CD4-positive, alpha-beta memory T cell (primary cell): ENCODE measurements at regions of chr14 and their contacts with region 1.

Region 1: GRCh38 chr14:70622111-70622712 is 19.5 kb upstream of the TTC9 start:
- DNase-seq: peak; percentile 47 to 63 (median 61)
- H3K4me3 ChIP-seq: no peak overlapping the region
- H3K4me3 Mint-ChIP-seq: no peak overlapping the region
- H3K27ac ChIP-seq: no peak overlapping the region
- H3K27ac Mint-ChIP-seq: no peak overlapping the region
- H3K4me1 ChIP-seq: no peaks in the 10 kb centered on the region
- H3K4me1 Mint-ChIP-seq: peaks cover 0 to 2% (median under 1%) of the 10 kb centered on the region in 4 donors
- H3K27me3 ChIP-seq: no peaks in the 10 kb centered on the region
- H3K27me3 Mint-ChIP-seq: no peaks in the 10 kb centered on the region

Region 2: DNA sequence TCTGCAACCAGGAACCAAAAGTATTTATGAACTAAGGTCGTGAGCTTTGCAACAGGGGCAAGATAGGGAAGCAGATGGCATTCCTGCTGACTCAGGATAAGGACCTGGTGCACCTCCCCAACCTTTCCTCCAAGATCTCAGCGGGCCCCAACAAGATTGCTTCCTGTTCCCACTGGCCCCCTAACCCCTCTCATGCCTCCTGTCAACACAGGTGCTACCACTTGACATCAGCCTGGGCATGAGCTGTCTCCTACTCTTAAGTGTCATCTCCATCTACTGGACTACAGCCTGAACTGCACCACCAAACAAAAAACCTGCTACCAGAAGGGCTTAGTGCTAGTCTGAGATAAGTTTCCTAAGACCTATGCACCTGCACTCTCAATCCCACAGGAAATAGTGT is 54.4 kb before region 1 on chr14:
- CTCF ChIA-PET with region 1: no interaction called
- POLR2A ChIA-PET with region 1: no interaction called
- intact Hi-C with region 1: no loop called
- DNase-seq: no peak
- H3K4me3 ChIP-seq: no peak overlapping the region
- H3K4me3 Mint-ChIP-seq: no peak overlapping the region
- H3K27ac ChIP-seq: no peak overlapping the region
- H3K27ac Mint-ChIP-seq: peak overlapping the region in 1 of 7 donors; percentile 9
- H3K4me1 ChIP-seq: no peaks in the 10 kb centered on the region
- H3K4me1 Mint-ChIP-seq: peaks cover 6 to 20% (median 17%) of the 10 kb centered on the region in 4 donors
- H3K27me3 ChIP-seq: no peaks in the 10 kb centered on the region
- H3K27me3 Mint-ChIP-seq: no peaks in the 10 kb centered on the region

Region 3: GRCh38 chr14:70640938-70641547 is 18.8 kb after region 1 on chr14:
- CTCF ChIA-PET with region 1: interaction called, 20 read pairs
- POLR2A ChIA-PET with region 1: interaction called, 8 read pairs
- intact Hi-C with region 1: loop called (anchors 2 kb)
- DNase-seq: peak; percentile 52 to 78 (median 59)
- H3K4me3 ChIP-seq: peak overlapping the region; percentile 78 to 85
- H3K4me3 Mint-ChIP-seq: peak overlapping the region; percentile 95 to 100 (median 97)
- H3K27ac ChIP-seq: peak overlapping the region; percentile 56
- H3K27ac Mint-ChIP-seq: peak overlapping the region; percentile 88 to 98 (median 95)
- H3K4me1 ChIP-seq: peaks cover 48% of the 10 kb centered on the region
- H3K4me1 Mint-ChIP-seq: peaks cover 35 to 64% (median 47%) of the 10 kb centered on the region in 4 donors
- H3K27me3 ChIP-seq: no peaks in the 10 kb centered on the region
- H3K27me3 Mint-ChIP-seq: peaks cover 0 to 1% of the 10 kb centered on the region in 2 donors

Region 4: DNA sequence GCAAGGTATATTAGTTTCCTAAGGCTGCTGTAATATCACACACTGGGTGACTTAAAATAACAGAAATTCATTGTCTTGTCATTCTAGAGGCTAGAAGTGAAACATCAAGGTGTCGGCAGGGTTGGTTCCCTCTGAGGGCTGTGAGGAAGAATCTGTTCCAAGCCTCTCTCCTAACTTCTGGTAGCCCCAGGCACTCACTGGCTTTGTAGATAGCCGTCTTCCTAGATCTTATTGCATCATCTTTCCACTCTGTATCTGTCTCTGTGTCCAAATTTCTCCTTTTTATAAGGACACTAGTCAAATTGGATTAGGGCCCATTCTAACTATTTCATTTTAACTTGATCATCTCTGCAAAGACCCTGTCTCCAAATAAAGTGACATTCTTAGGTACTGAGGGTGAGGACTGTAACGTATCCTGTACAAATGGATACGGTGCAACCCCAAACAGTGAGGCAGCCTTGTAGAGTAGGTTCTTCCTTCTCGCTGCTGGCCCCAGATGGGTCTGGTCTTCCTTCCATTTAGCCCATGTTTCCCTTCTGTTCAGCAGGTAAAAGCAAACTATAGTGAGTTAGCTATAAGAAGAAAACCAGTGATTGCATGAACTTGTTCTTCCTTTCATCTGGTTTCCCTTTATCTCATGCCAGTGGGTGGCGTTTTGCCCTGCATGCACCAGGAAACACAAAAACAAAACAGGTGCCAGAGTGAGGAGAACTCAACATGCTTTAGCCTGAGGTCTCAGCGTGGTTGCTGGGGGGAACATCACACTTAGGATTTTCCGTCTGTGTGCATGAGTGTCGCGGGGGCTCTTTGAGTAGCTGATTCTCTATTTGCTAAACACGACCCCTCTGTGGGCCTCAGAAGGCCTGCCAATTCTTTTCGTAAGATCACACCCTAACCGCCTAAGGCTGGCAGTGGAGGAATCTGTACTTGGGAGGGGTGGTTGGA is 39.0 kb after region 1 on chr14:
- CTCF ChIA-PET with region 1: interaction called, 30 read pairs
- POLR2A ChIA-PET with region 1: interaction called, 3 read pairs
- intact Hi-C with region 1: loop called (anchors 1 kb)
- DNase-seq: peak; percentile 55 to 72 (median 60)
- H3K4me3 ChIP-seq: no peak overlapping the region
- H3K4me3 Mint-ChIP-seq: peak overlapping the region; percentile 26 to 80 (median 68)
- H3K27ac ChIP-seq: peak overlapping the region; percentile 49
- H3K27ac Mint-ChIP-seq: peak overlapping the region; percentile 88 to 98 (median 93)
- H3K4me1 ChIP-seq: peaks cover 79% of the 10 kb centered on the region
- H3K4me1 Mint-ChIP-seq: peaks cover 67 to 94% (median 79%) of the 10 kb centered on the region in 4 donors
- H3K27me3 ChIP-seq: no peaks in the 10 kb centered on the region
- H3K27me3 Mint-ChIP-seq: no peaks in the 10 kb centered on the region

Region 5: DNA sequence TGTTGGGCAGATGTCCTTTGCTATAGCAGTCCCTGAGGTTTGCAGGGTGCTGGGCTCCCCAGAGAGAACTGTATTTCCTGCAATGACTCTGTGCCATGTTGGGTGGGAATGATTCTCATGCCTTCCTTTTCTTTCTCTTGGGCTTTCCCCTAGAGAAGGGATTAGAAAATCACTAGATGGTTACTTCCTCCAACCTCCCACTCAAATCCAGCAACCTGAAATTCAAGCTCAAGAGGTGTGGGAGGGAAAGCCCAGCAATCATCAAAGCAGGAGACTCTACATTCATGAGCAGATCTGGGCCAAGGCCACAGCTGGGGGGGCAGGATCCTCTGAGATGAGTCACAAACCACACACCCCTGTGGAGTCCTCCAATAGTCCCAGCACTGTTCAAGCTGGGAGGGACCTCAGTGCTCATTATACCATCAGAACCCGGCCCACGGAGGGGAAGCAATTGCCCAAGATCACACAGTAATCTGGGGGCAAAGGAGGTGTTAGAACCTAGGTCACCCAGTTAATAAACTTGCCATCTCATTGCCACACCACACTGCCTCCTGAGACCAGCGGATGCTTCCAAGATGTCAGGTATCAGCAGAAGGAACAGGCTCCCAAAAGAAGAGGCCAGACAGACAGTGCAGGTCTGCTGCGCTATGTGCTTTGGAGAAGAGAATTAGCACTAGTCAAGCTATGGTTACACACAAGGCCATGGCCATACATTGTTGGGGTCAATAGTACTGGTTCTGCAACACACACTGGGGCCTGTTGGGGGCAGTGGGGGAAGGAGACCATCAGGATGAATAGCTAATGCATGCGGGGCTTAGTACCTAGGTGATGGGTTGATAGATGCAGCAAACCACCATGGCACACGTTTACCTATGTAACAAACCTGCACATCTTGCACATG is 85.2 kb after region 1 on chr14:
- CTCF ChIA-PET with region 1: interaction called, 231 read pairs
- POLR2A ChIA-PET with region 1: no interaction called
- intact Hi-C with region 1: loop called (anchors 1 kb)
- DNase-seq: no peak
- H3K4me3 ChIP-seq: no peak overlapping the region
- H3K4me3 Mint-ChIP-seq: no peak overlapping the region
- H3K27ac ChIP-seq: no peak overlapping the region
- H3K27ac Mint-ChIP-seq: no peak overlapping the region
- H3K4me1 ChIP-seq: no peaks in the 10 kb centered on the region
- H3K4me1 Mint-ChIP-seq: no peaks in the 10 kb centered on the region
- H3K27me3 ChIP-seq: no peaks in the 10 kb centered on the region
- H3K27me3 Mint-ChIP-seq: peaks cover 0 to 1% of the 10 kb centered on the region in 2 donors

Region 6: GRCh38 chr14:70721542-70721941 is 99.3 kb after region 1 on chr14:
- CTCF ChIA-PET with region 1: interaction called, 231 read pairs
- POLR2A ChIA-PET with region 1: no interaction called
- intact Hi-C with region 1: no loop called
- DNase-seq: no peak
- H3K4me3 ChIP-seq: no peak overlapping the region
- H3K4me3 Mint-ChIP-seq: no peak overlapping the region
- H3K27ac ChIP-seq: no peak overlapping the region
- H3K27ac Mint-ChIP-seq: no peak overlapping the region
- H3K4me1 ChIP-seq: no peaks in the 10 kb centered on the region
- H3K4me1 Mint-ChIP-seq: no peaks in the 10 kb centered on the region
- H3K27me3 ChIP-seq: no peaks in the 10 kb centered on the region
- H3K27me3 Mint-ChIP-seq: peaks cover 0 to under 1% of the 10 kb centered on the region in 2 donors

Region 7: GRCh38 chr14:70821584-70822529 is 199.6 kb after region 1 on chr14:
- CTCF ChIA-PET with region 1: interaction called, 5 read pairs
- POLR2A ChIA-PET with region 1: no interaction called
- intact Hi-C with region 1: loop called (anchors 1 kb)
- DNase-seq: peak; percentile 37 to 79 (median 49)
- H3K4me3 ChIP-seq: peak overlapping the region; percentile 52 to 73
- H3K4me3 Mint-ChIP-seq: peak overlapping the region; percentile 83 to 93 (median 86)
- H3K27ac ChIP-seq: peak overlapping the region; percentile 14
- H3K27ac Mint-ChIP-seq: peak overlapping the region in 5 of 7 donors; percentile 62 to 77 (median 68)
- H3K4me1 ChIP-seq: peaks cover 18% of the 10 kb centered on the region
- H3K4me1 Mint-ChIP-seq: peaks cover 10 to 23% (median 14%) of the 10 kb centered on the region in 4 donors
- H3K27me3 ChIP-seq: no peaks in the 10 kb centered on the region
- H3K27me3 Mint-ChIP-seq: no peaks in the 10 kb centered on the region

Region 8: GRCh38 chr14:70972107-70972976 is 350.1 kb after region 1 on chr14:
- CTCF ChIA-PET with region 1: no interaction called
- POLR2A ChIA-PET with region 1: no interaction called
- intact Hi-C with region 1: loop called (anchors 5 kb)
- DNase-seq: peak; percentile 72 to 82 (median 78)
- H3K4me3 ChIP-seq: no peak overlapping the region
- H3K4me3 Mint-ChIP-seq: peak overlapping the region in 4 of 8 donors; percentile 20 to 63 (median 46)
- H3K27ac ChIP-seq: peak overlapping the region; percentile 4
- H3K27ac Mint-ChIP-seq: peak overlapping the region; percentile 67 to 90 (median 87)
- H3K4me1 ChIP-seq: peaks cover 48% of the 10 kb centered on the region
- H3K4me1 Mint-ChIP-seq: peaks cover 40 to 67% (median 52%) of the 10 kb centered on the region in 4 donors
- H3K27me3 ChIP-seq: no peaks in the 10 kb centered on the region
- H3K27me3 Mint-ChIP-seq: no peaks in the 10 kb centered on the region